Activated T-helper 2 cell treated with anti-CD3 and anti-CD28 coated beads, Interferon-gamma antibody, Interleukin-2, Interleukin-4, amounts not matched to agents 10 μg/mL and 5 μg/mL and 100 μg/mL, durations not matched to agents 14 hours and 24 hours and 36 hours (primary cell): ENCODE measurements at regions of chr9 and their contacts with region 1.

Region 1: DNA sequence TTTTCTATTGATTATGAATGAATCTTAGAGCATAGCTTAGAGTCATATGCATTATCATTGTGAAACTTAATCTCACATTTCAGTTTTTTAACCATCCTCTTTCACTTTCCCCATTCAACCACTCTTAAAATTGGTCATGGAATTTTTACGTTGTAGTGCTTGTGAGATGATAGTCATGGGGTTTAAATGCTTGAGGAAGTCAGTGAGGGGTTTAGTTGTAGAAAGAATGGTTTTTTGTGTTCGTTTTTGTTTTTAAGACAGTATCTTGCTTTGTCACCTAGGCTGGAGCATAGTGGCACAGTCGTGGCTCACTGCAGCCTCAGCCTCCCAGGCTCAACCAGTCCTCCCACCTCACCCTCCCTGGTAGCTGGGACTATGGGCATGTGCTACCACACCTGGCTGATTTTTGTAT is 19.6 kb downstream of the UGCG start:
- DNase-seq: no peak
- H3K4me3 Mint-ChIP-seq: peak overlapping the region; percentile 13
- H3K27ac Mint-ChIP-seq: peak overlapping the region; percentile 72
- H3K4me1 Mint-ChIP-seq: peaks cover 37% of the 10 kb centered on the region
- H3K27me3 Mint-ChIP-seq: no peaks in the 10 kb centered on the region

Region 2: GRCh38 chr9:111118256-111118948 is 797.8 kb before region 1 on chr9:
- intact Hi-C with region 1: no loop called
- DNase-seq: no peak
- H3K4me3 Mint-ChIP-seq: no peak overlapping the region
- H3K27ac Mint-ChIP-seq: no peak overlapping the region
- H3K4me1 Mint-ChIP-seq: no peaks in the 10 kb centered on the region
- H3K27me3 Mint-ChIP-seq: no peaks in the 10 kb centered on the region

Region 3: DNA sequence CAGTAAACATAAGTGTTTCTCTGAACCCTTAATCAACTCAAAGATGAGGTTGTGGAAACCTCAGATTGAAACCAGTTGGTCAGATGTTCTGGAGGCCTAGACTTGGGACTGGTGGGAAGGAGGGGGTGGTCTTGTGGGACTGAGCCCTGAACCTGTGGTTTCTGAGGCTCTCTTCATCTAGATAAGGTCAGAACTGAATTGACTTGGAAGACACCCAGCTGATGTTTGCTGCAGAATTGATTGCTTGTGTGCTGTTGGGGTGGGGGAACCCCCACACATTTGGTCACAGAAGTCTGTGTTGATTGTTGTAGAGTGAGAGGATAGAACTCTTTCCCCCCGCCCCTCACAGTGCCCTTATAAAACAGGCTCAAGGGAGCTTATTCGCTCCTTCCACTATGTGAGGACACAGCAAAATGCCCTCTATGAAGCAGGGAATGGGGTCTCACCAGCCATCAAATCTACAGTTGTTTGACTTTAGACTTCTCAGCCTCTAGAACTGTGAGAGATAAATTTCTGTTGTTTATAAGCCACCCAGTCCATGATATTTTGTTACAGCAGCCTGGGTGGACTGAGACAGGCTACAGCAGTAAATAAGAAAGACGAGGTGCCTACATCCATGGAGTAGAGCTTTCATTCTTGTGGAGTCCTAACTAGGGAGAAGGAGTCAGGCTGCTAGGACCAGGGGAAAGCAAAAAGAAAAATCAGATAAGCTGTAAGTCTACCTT is 45.3 kb before region 1 on chr9:
- intact Hi-C with region 1: loop called (anchors 2 kb)
- DNase-seq: peak; percentile 11
- H3K4me3 Mint-ChIP-seq: no peak overlapping the region
- H3K27ac Mint-ChIP-seq: no peak overlapping the region
- H3K4me1 Mint-ChIP-seq: peaks cover 18% of the 10 kb centered on the region
- H3K27me3 Mint-ChIP-seq: peaks cover 50% of the 10 kb centered on the region

Region 4: GRCh38 chr9:111926421-111926875 is 10.2 kb after region 1 on chr9:
- intact Hi-C with region 1: loop called (anchors 1 kb)
- DNase-seq: peak; percentile 25
- H3K4me3 Mint-ChIP-seq: no peak overlapping the region
- H3K27ac Mint-ChIP-seq: peak overlapping the region; percentile 12
- H3K4me1 Mint-ChIP-seq: peaks cover 18% of the 10 kb centered on the region
- H3K27me3 Mint-ChIP-seq: no peaks in the 10 kb centered on the region

Region 5: DNA sequence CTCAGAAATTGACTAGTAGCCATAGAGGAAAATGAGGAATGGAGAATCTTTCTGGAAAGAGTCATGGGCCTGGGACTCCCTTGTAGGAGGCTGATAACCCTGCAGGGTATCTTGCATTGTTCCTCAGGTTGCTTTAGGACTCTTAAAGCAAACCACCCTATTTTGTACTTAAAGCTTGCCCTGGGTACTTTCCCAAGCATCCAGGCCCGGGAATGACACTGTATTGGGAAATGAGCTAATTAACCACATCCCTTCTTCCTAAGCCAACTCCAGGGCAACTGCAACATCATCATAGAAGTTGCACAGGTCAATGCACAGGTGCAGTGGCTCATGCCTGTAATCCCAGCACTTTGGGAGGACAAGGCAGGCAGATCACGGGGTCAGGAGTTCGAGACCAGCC is 36.3 kb after region 1 on chr9:
- intact Hi-C with region 1: no loop called
- DNase-seq: no peak
- H3K4me3 Mint-ChIP-seq: no peak overlapping the region
- H3K27ac Mint-ChIP-seq: no peak overlapping the region
- H3K4me1 Mint-ChIP-seq: peaks cover 2% of the 10 kb centered on the region
- H3K27me3 Mint-ChIP-seq: peaks cover 19% of the 10 kb centered on the region

Region 6: DNA sequence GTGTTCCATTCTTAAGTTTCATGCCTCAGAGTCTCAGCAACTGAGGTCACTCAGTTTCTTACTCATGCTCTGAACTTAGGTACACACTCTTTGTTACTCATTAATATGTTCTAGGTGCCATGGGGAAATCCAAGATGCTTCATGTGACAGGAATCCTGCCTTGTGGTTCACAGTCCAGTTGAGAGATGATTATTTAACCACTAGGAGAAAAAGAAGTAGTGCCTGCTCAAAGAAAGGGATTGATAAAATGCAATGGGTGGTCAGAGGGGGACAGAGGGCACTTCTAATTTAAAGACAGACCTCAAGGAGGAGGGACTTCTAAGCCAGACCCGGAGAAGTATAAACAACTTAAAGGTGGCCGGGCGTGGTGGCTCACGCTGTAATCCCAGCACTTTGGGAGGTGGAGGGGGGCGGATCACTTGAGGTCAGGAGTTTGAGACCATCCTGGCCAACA is 49.4 kb after region 1 on chr9:
- intact Hi-C with region 1: loop called (anchors 1 kb)
- DNase-seq: no peak
- H3K4me3 Mint-ChIP-seq: no peak overlapping the region
- H3K27ac Mint-ChIP-seq: no peak overlapping the region
- H3K4me1 Mint-ChIP-seq: peaks cover 4% of the 10 kb centered on the region
- H3K27me3 Mint-ChIP-seq: peaks cover 19% of the 10 kb centered on the region

Region 7: GRCh38 chr9:112012026-112012902 is 96.0 kb after region 1 on chr9:
- intact Hi-C with region 1: loop called (anchors 1 kb)
- DNase-seq: no peak
- H3K4me3 Mint-ChIP-seq: no peak overlapping the region
- H3K27ac Mint-ChIP-seq: no peak overlapping the region
- H3K4me1 Mint-ChIP-seq: peaks cover 22% of the 10 kb centered on the region
- H3K27me3 Mint-ChIP-seq: peaks cover 49% of the 10 kb centered on the region

Region 8: GRCh38 chr9:112037281-112038016 is 121.2 kb after region 1 on chr9:
- intact Hi-C with region 1: loop called (anchors 1 kb)
- DNase-seq: peak; percentile 70
- H3K4me3 Mint-ChIP-seq: no peak overlapping the region
- H3K27ac Mint-ChIP-seq: peak overlapping the region; percentile 76
- H3K4me1 Mint-ChIP-seq: peaks cover 36% of the 10 kb centered on the region
- H3K27me3 Mint-ChIP-seq: peaks cover 33% of the 10 kb centered on the region

Region 9: GRCh38 chr9:112750111-112750767 is 834.0 kb after region 1 on chr9 and contains the start of gene SNX30:
- intact Hi-C with region 1: loop called (anchors 5 kb)
- DNase-seq: peak; percentile 79
- H3K4me3 Mint-ChIP-seq: peak within 1 kb of the TSS; percentile 84
- H3K27ac Mint-ChIP-seq: peak within 1 kb of the TSS; percentile 86
- H3K4me1 Mint-ChIP-seq: peaks cover 52% of the 10 kb centered on the region
- H3K27me3 Mint-ChIP-seq: peaks cover 3% of the 10 kb centered on the region
- total RNA-seq, gene SNX30: 2.4 and 2.8 TPM in 2 replicates